ENCODE measurements at regions of chr1 and their contacts with region 1.

Region 1: DNA sequence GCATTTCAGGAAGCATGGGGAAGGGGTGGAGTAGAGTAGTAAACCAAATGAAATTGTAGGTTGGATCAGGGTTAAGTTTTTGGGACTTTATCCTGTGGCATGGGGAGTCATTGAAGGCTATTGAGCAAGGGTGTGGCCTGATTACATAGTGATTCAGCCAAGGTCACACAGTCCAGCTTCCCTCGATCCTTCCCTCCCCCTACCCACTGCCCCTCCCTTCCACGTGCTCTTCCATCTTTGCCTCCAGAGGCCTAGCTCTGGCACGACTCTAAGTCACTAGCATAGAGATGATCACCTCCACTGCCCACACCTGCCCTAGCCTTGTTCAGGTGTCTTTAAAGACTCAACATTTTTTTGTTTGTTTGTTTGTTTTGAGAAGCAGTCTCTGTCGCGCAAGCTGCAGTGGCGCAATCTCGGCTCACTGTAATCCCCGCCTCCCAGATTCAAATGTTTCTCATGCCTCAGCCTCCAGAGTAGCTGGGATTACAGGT is 37.2 kb upstream of the SLC9A1 start:
- DNase-seq: no peak
- ATAC-seq: no peak
- H3K4me3 ChIP-seq: no peak overlapping the region
- H3K27ac ChIP-seq: no peak overlapping the region
- H3K4me1 ChIP-seq: no peaks in the 10 kb centered on the region
- H3K27me3 ChIP-seq: no peaks in the 10 kb centered on the region; a peak in 1 of 4 replicates
- CTCF ChIP-seq: no peak
- EP300 ChIP-seq: no peak
- POLR2A ChIP-seq: no peak
- RAD21 ChIP-seq: no peak

Region 2: DNA sequence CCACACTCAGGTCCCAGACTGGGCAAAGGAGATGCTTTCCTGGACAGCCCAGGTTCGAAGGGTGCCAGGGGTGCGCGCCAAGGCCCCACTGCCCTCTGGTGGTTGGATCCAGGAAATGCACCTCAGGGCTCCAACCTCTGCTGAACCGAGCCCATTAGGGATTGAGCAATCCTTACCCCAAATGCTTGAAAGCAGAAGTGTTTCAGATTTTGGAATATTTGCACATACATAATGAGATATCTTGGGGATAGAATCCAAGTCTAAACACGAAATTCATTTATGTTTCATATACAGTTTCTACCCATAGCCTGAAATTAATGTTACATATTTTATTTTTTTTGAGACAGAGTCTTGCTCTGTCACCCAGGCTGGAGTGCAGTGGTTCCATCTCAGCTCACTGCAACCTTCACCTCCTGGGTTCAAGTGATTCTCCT is 94.6 kb before region 1 on chr1:
- CTCF ChIA-PET with region 1: interaction called, 24 read pairs
- POLR2A ChIA-PET with region 1: no interaction called
- RAD21 ChIA-PET with region 1: interaction called, 15 read pairs
- SMC1A ChIA-PET with region 1: interaction called, 7 read pairs
- in situ Hi-C with region 1: loop called (anchors 5 kb)
- intact Hi-C with region 1: no loop called
- DNase-seq: no peak
- ATAC-seq: peak; percentile 78
- H3K4me3 ChIP-seq: no peak overlapping the region
- H3K27ac ChIP-seq: no peak overlapping the region
- H3K4me1 ChIP-seq: peaks cover 14% of the 10 kb centered on the region
- H3K27me3 ChIP-seq: no peaks in the 10 kb centered on the region
- CTCF ChIP-seq: peak; percentile 94 to 97 (median 94)
- EP300 ChIP-seq: no peak
- POLR2A ChIP-seq: no peak
- RAD21 ChIP-seq: peak; percentile 81

Region 3: DNA sequence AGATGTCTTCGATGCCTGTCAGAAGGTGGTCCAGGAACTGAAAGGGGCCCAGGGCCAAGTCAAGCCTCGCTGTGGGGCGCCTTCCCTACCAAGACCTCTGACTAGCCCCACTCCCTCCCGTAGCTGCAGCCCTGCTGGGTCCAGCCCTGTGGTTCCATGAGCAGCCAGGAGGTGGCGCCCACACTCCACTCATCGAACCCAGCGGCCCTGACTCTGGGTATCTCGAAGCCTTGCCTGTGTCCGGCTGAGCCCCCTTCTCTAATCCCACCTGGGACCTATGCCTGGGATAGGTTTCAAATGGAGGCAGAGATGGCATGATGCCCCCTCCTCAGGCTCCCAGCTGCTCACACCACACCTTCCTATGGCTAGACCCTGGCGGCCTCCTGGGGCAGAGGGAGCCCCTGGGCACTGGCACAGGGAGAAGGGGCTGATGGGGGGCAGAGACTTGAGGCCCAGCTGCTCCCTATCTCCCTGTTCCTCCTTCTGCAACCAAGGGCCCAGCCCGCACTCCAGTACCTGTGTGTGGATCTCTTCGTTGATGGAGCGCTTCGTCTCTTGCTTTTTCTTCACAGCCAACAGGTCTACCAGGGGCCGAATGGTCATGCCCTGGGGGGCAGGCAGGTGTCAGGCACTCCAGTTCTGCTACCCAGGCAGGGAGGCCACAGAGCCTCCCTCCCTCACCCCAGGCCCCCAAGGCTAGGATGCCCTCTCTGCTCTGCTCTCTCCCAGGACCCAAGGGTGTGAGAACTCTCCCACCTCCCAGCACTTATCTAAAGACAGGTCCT is 89.2 kb before region 1 on chr1:
- CTCF ChIA-PET with region 1: interaction called, 24 read pairs
- POLR2A ChIA-PET with region 1: no interaction called
- RAD21 ChIA-PET with region 1: interaction called, 15 read pairs
- SMC1A ChIA-PET with region 1: interaction called, 7 read pairs
- in situ Hi-C with region 1: loop called (anchors 5 kb)
- intact Hi-C with region 1: no loop called
- DNase-seq: no peak
- ATAC-seq: peak; percentile 73
- H3K4me3 ChIP-seq: no peak overlapping the region
- H3K27ac ChIP-seq: no peak overlapping the region
- H3K4me1 ChIP-seq: peaks cover 24% of the 10 kb centered on the region
- H3K27me3 ChIP-seq: no peaks in the 10 kb centered on the region
- CTCF ChIP-seq: peak; percentile 95 to 98 (median 97)
- EP300 ChIP-seq: no peak
- POLR2A ChIP-seq: no peak
- RAD21 ChIP-seq: peak; percentile 95

Region 4: DNA sequence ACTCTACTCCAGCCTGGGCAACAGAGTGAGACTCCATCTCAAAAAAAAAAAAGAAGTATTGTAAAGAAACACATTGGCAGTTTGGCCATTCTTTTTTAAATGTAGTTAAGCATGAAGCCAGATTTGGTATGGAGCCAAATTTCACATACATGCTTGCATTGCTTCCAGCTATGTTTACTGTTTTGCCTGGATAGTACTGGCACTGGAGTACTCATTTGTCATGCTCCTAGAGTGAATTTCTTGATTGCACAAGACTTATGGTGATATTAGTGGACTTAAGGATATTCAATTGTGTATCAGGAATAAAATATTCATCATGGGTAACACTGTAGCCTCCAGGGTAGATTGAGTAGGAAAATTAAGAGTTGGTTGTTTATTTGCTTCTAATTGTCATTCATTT is 12.7 kb before region 1 on chr1:
- CTCF ChIA-PET with region 1: interaction called, 10 read pairs
- POLR2A ChIA-PET with region 1: no interaction called
- RAD21 ChIA-PET with region 1: no interaction called
- SMC1A ChIA-PET with region 1: interaction called, 3 read pairs
- in situ Hi-C with region 1: no loop called
- intact Hi-C with region 1: no loop called
- DNase-seq: no peak
- ATAC-seq: no peak
- H3K4me3 ChIP-seq: no peak overlapping the region
- H3K27ac ChIP-seq: no peak overlapping the region
- H3K4me1 ChIP-seq: no peaks in the 10 kb centered on the region
- H3K27me3 ChIP-seq: no peaks in the 10 kb centered on the region
- CTCF ChIP-seq: no peak
- EP300 ChIP-seq: no peak
- POLR2A ChIP-seq: no peak
- RAD21 ChIP-seq: no peak

Region 5: DNA sequence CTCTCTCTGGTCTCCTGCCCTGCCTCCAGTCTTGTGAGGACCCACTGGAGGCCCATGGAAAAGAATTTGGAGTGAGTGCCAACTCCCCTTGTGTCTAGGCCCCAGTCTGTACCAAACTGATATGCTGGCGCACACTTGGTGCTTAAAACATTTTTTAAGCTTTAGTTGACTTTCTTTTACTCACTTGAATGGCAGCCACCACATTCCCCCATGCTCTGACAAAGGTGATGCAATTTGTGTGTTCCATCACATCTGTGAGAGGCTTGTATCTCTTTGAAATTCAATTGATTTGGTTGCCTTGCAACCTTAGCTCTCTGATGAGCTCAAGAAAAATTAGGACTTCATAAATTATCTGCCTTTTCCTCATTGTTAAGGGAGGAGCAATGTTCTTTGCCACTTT is 11.9 kb after region 1 on chr1:
- CTCF ChIA-PET with region 1: no interaction called
- POLR2A ChIA-PET with region 1: no interaction called
- RAD21 ChIA-PET with region 1: no interaction called
- SMC1A ChIA-PET with region 1: no interaction called
- in situ Hi-C with region 1: no loop called
- intact Hi-C with region 1: no loop called
- DNase-seq: no peak
- ATAC-seq: no peak
- H3K4me3 ChIP-seq: no peak overlapping the region
- H3K27ac ChIP-seq: no peak overlapping the region
- H3K4me1 ChIP-seq: no peaks in the 10 kb centered on the region
- H3K27me3 ChIP-seq: no peaks in the 10 kb centered on the region
- CTCF ChIP-seq: no peak
- EP300 ChIP-seq: no peak
- POLR2A ChIP-seq: no peak
- RAD21 ChIP-seq: no peak

Region 6: DNA sequence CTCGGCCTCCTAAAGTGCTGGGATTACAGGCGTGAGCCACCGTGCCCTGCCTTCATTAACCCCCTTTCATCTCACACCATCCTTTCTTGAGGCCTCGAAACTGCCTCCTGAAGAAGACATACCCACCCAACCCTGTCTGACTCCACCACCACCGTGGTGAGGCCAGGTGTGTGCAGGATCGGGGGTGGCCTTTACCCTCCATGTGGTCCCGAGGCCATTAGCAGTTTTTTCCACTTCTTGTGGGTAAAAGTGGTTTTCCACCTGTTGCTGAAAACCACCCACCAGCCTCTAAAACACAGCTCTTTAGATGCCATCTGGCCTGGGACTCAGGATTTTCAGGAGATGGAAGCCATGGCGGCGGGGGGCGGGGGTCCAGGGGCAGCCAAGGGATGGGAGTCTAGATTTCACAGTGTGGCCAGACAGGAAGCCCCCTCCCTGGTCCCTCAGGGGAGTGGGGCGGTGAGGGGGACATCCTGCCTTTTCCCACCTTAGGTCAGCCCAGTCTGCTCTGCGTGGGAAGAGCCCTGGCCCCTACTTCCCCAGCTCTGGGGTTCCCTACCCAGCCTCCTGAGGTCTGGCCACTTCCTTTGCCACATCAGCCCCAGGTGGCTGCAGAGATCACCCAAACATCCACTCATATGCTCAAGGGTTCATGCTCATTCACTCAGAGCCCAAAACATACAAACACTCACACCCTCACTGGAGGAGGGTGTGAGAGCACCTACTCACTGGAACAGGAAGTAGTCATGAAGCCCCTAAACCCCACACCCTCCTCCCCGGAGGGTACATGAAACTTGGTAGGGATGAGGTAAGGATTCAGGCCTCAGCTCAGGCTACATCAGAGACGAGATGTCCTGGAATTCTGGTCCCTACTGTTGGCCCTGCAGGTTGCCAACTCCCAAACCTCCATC is 440.6 kb after region 1 on chr1:
- CTCF ChIA-PET with region 1: no interaction called
- POLR2A ChIA-PET with region 1: no interaction called
- RAD21 ChIA-PET with region 1: no interaction called
- SMC1A ChIA-PET with region 1: no interaction called
- in situ Hi-C with region 1: no loop called
- intact Hi-C with region 1: no loop called
- DNase-seq: peak; percentile 94
- ATAC-seq: peak; percentile 54
- H3K4me3 ChIP-seq: peak overlapping the region; percentile 66
- H3K27ac ChIP-seq: peak overlapping the region; percentile 95
- H3K4me1 ChIP-seq: peaks cover 86% of the 10 kb centered on the region
- H3K27me3 ChIP-seq: no peaks in the 10 kb centered on the region
- CTCF ChIP-seq: no peak
- EP300 ChIP-seq: peak in 1 of 2 experiments; percentile 56; a peak in 2 of 4 replicates
- POLR2A ChIP-seq: peak; percentile 52; the same call in 1 of the 2 replicates
- RAD21 ChIP-seq: peak; percentile 4; the same call in 1 of the 2 replicates

Measured in GM12878 (cell line).